HepG2 (cell line): ENCODE measurements at regions of chr20 and their contacts with region 1.

Region 1: DNA sequence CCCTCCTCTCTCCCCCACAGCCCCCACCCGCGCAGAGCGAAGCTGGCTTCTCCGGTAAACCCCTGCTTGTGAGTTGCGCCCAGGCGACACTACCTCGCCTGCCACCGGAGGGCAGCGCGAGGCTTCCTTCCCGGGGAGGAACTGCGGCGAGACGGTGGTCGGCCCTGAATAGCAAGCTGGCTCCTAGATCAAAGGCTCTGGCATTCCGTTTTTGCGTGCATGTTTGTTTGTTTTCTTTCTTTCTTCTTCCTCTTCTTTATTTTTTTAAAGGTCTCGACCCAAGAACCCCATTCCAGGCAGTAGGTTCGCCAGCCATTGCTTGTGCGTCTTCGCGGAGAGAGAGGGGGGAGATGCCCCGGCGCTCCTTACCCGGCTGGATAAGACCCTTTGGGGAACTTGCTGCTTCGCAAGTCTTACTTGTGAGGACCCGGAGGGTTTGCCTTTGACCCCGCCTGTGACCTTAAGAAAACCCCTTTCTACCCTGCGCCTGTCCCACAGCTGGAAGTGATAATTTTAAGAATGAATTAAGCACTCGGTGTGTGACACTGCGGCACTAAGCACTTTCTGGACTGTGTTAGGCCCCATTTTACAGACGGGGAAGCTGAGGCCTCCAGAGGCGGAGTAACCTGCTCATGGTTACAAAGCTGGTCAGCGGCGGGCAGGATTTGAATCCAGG is 92.7 kb upstream of the SIRPA start:
- DNase-seq: peak; percentile 67
- ATAC-seq: peak; percentile 95
- H3K4me3 ChIP-seq: no peak overlapping the region
- H3K27ac ChIP-seq: no peak overlapping the region
- H3K4me1 ChIP-seq: peaks cover 24% of the 10 kb centered on the region; the same call in 1 of the 2 replicates
- H3K27me3 ChIP-seq: no peaks in the 10 kb centered on the region
- CTCF ChIP-seq: peak; percentile 97
- EP300 ChIP-seq: no peak
- POLR2A ChIP-seq: no peak
- RAD21 ChIP-seq: peak; percentile 84

Region 2: DNA sequence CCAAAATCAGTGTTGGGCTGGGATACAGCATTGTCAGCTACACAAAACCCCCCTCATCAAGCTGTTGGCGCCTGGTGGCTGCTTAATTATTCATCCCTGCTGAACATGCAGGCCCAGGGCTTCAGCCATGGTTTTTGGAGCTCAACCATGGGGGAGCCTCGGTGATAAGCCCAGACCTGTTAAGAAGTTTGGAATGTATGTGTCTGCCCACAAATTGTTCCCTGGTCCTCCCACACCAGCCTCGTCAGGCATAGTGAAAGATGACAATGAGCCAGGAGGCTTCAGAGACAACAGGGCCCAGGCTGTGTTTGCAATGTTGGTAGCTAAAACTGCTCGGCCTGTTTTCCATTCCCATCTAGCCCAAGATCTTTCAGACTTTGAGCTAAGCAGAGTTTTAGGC is 57.9 kb after region 1 on chr20:
- CTCF ChIA-PET with region 1: no interaction called
- POLR2A ChIA-PET with region 1: no interaction called
- in situ Hi-C with region 1: no loop called
- intact Hi-C with region 1: no loop called
- DNase-seq: no peak
- ATAC-seq: no peak
- H3K4me3 ChIP-seq: no peak overlapping the region
- H3K27ac ChIP-seq: no peak overlapping the region
- H3K4me1 ChIP-seq: peaks cover 40% of the 10 kb centered on the region
- H3K27me3 ChIP-seq: no peaks in the 10 kb centered on the region
- CTCF ChIP-seq: no peak
- EP300 ChIP-seq: no peak
- POLR2A ChIP-seq: no peak
- RAD21 ChIP-seq: no peak

Region 3: DNA sequence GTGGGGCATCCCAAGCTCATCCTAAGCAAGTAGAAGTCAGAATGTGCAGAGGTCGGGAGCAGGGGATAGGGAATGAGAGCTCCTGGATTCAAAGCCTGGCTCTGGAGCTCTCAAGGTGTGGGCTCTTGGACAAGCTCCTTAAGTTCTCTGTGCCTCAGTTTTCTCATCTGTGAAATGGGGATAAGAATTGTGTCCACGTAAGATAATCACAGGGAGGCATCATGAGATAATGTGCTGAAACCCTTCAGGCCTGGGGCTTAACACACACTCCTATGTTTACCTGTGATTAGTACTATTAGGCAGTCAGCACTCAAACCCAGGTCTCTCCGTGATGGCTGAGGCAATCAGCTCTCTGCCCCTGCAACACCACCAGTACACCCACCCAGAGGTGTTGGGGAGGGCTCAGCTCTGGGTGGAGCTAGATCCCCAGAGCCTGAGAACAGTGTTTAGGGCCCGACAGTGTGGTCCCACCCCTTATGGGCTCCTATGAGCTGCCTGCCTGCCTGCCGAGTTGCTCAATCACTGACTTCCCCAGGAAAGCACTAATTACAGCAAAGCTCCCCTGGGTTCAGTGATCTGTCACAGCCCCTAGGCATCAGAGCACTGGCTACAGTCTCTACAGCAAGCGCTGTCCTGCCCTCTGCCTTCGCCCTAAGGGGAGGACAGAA is 86.4 kb after region 1 on chr20:
- CTCF ChIA-PET with region 1: no interaction called
- POLR2A ChIA-PET with region 1: no interaction called
- in situ Hi-C with region 1: no loop called
- intact Hi-C with region 1: loop called (anchors 2 kb)
- DNase-seq: peak; percentile 60
- ATAC-seq: peak; percentile 59
- H3K4me3 ChIP-seq: peak overlapping the region in 1 of 3 experiments; percentile 10; a peak in 1 of 6 replicates
- H3K27ac ChIP-seq: no peak overlapping the region
- H3K4me1 ChIP-seq: peaks cover 73% of the 10 kb centered on the region
- H3K27me3 ChIP-seq: peaks cover 4 to 14% of the 10 kb centered on the region in 2 experiments
- CTCF ChIP-seq: peak; percentile 16; the same call in 1 of the 2 replicates
- EP300 ChIP-seq: no peak
- POLR2A ChIP-seq: no peak
- RAD21 ChIP-seq: no peak

Region 4: DNA sequence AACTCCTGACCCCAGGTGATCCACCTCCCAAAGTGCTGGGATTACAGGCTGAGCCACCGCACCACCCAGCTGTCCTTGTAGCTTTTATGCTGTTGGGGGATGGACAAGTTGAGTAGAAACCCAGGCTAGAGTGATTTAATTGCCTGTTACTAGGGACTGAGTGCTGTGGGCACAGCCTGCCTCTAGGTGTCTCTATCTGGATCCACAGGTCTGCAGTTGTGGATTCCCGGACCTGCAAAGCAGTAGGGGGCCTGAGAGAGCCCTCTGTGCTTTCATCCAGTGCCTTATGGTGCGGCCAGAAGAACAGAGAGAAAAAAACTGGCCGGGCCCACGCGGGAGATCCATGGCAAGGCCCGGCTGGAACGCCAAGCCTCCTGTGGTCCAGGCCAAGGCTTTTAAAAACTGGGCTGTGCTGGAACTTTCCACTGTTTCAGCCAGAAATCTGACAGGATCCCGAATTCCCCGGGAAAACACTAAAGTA is 97.8 kb after region 1 on chr20:
- CTCF ChIA-PET with region 1: interaction called, 6 read pairs
- POLR2A ChIA-PET with region 1: interaction called, 3 read pairs
- in situ Hi-C with region 1: no loop called
- intact Hi-C with region 1: loop called (anchors 1 kb)
- DNase-seq: peak; percentile 89
- ATAC-seq: peak; percentile 99
- H3K4me3 ChIP-seq: no peak overlapping the region
- H3K27ac ChIP-seq: no peak overlapping the region
- H3K4me1 ChIP-seq: peaks cover 38% of the 10 kb centered on the region
- H3K27me3 ChIP-seq: peaks cover 6 to 9% of the 10 kb centered on the region in 2 experiments; a peak in 4 of 5 replicates
- CTCF ChIP-seq: peak; percentile 83
- EP300 ChIP-seq: no peak
- POLR2A ChIP-seq: no peak
- RAD21 ChIP-seq: peak; percentile 67